ENCODE measurements at regions of chr4 and their contacts with region 1.

Region 1: DNA sequence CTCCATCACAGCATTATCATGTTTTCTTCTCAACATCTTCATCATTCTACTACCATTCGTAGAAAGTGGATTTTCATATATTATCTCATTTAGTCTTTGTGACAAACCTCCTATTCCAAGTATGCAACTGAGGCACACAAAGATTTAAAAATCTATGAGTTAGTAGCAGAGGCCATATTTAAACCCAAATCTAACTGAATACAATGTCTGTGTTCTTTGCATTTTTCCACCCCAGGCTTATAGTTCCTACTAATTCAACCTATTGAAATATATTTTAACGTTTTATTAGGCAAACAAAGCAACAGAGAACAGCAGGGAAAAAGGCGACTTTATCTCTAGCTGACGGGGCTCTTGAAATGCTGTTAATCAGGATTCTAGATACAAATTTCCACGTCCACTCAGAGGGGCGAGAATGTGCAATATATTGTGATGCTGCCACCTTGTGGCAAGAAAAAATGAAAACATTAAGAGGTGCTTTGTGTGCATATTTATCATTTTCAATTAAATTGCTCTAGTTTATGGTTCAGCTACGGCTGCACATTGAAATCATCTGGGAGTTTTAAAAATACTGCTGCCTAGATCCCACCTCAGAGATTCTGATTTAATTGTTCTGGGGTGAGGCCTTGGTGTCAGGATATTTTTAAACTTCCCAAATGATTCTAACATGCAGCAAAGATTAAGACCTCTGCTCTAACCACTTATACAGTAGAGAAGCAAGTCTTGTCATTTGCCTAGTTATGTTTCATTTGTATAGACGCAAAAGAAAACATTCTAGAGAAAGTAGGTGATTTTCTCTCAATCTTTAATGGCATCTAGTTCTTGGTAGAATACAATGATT is 315.9 kb downstream of the MAPK10 start:
- DNase-seq: peak; percentile 8
- CTCF ChIP-seq: peak; percentile 69

Region 2: DNA sequence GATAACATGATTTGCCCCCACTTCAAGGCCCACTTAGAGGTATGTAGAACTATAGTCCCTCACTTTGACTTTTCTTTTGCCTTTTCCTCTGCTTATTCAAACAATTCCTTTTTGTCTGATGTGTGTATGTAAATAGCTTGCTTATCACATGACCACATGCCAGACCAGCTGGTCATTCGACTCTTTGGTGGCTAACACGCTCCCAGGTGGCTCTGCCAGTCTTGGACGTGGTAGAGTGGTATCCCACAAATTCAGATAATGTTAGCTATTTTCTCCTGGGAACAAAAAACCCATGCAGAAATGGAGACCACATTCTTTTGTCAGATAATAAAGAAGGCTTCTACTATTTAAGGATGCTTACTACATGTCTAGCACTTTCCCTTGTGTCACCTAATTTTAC is 521.1 kb before region 1 on chr4:
- CTCF ChIA-PET with region 1: no interaction called
- POLR2A ChIA-PET with region 1: no interaction called
- DNase-seq: no peak
- CTCF ChIP-seq: no peak

Region 3: DNA sequence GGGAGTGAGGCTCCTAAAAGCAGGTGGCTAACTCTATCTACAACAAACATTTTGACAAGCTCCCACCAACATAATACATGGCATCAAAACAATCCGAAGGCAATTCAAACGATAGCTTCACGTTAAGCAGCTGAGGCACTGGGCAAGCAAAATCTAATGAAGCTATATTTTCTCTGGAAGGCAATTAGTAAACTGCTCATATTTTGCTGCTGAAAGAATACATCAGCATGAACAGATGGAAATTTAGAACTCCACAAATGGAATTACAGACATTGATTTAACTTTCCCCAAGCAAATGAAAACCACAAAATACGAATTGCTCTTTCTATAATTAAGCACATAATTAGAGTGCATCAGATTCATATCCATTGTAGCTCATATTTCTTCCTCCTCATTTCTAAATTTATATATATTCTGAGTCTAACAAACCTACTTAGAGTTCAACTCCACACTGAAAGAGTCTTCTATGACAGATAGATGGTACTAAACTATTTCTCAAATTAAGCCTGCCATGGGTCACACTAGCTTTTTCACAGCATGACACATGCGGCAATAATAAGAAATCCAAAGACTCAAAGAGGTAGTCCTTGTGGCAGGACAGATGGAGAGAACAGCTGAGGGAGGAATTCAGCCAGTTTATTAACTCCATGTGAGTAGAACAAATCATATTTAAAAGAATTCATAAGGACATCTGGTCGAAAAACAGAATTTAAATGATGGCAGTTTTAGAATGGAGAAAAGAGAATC is 10.5 kb after region 1 on chr4:
- CTCF ChIA-PET with region 1: interaction called, 18 read pairs
- POLR2A ChIA-PET with region 1: no interaction called
- DNase-seq: no peak
- CTCF ChIP-seq: no peak